Heart left ventricle (tissue), 16 donors: ENCODE measurements at regions of chr12 and their contacts with region 1.

Region 1: GRCh38 chr12:114508529-114509129 is 102.7 kb upstream of the TBX5 start:
- DNase-seq: peak; percentile 50 to 73 (median 59)
- ATAC-seq: peak in 3 of 4 donors; percentile 53 to 73 (median 68)
- H3K4me3 ChIP-seq: no peak overlapping the region
- H3K27ac ChIP-seq: no peak overlapping the region
- H3K4me1 ChIP-seq: no peaks in the 10 kb centered on the region
- H3K27me3 ChIP-seq: peaks cover 0 to 45% (median 3%) of the 10 kb centered on the region in 9 donors
- CTCF ChIP-seq: peak; percentile 58 to 84 (median 70)
- POLR2A ChIP-seq: no peak

Region 2: DNA sequence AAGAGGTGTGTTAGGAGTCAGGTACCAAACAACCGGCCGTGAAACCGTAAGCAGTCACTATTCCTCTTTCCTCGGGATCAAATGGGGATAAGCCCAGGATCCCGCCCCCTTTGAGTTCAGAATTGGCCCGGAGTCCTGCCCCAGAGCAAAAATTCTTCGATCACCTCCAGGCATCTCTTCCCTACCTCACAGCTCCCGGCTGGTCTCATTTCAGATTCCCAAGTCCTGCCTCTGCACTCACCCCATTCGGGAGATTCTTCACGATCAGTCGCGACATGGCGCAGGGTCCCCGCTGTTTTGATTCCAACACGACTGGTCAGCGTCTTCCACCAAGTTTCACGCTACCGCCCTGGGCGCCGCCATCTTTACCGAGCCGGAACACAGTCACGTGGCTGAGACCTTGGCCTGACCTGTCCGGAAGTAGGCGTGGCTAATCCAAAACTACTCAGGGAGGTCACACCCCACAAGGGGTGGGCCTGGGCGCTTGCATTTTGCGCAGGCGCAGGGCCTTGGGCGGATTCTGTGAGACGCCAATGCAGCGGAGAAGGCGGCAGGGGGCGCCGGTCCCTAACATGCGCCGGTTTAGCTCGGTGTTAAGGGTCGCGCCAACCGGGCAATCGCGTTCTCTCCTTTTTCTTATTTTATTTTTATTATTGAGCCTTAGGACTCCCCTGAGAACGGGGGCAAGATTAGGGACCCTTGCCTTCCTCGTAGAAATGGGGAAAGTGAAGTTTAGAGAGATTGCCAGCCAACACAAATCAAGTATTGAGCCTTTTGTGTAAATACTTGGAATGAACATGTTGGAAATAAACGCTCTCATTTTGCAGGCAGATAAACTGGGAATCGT is 542.5 kb before region 1 on chr12 and contains the start of gene RBM19:
- intact Hi-C with region 1: loop called in 3 of 10 experiments (anchors 1 to 5 kb)
- DNase-seq: peak; percentile 97 to 98 (median 98)
- ATAC-seq: peak; percentile 99 to 100 (median 100)
- H3K4me3 ChIP-seq: peak within 1 kb of the TSS; percentile 60 to 84 (median 72)
- H3K27ac ChIP-seq: peak within 1 kb of the TSS in 10 of 12 donors; percentile 10 to 69 (median 58)
- H3K4me1 ChIP-seq: peaks cover 0 to 24% (median 12%) of the 10 kb centered on the region in 12 donors
- H3K27me3 ChIP-seq: no peaks in the 10 kb centered on the region
- CTCF ChIP-seq: peak; percentile 81 to 99 (median 94)
- POLR2A ChIP-seq: peak in 1 of 2 donors; percentile 47
- total RNA-seq, gene RBM19: 12.7 to 23.8 (median 17.4) TPM

Region 3: DNA sequence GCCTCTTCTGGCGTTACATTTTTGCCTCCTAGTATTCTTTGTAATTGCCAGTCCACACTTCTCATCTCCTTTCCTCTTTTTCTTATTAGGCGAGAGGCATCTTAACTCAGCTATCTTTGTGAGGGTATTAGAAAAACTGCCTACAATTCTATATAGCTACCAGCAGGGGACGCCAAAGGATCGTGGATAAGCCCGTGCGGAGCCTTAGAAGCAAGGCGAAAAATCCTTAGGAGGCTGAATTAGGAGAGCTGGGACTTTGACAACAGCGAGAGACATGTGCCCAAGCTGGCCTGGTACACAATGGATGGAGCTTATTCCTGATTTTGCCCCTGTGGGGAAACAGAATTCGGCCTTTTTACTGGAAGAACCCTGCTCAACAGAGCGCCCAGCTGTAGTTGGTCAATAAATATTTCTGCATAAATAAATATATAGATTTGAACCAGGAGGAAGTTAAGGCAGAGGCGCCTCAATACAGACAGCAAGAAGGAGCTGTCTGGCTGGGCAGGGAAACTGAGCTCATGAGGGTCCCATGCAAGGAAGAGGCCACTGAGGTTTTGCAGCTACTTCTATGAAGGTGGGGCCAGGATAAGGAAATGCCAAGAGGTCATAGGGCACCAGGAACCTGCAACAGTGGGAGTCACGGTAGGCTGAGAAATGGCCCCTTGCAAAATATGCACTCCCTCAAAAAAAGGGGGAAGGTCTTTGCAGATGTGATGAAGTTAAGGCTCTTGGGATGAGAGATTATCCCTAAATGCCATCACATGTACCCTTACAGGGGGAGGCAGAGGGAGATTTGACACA is 527.9 kb before region 1 on chr12:
- intact Hi-C with region 1: loop called (anchors 1 to 5 kb)
- DNase-seq: peak in 1 of 5 donors; percentile 34
- ATAC-seq: peak in 3 of 4 donors; percentile 57 to 73 (median 67)
- H3K4me3 ChIP-seq: no peak overlapping the region
- H3K27ac ChIP-seq: no peak overlapping the region
- H3K4me1 ChIP-seq: no peaks in the 10 kb centered on the region
- H3K27me3 ChIP-seq: peaks cover 0 to 36% (median 10%) of the 10 kb centered on the region in 9 donors
- CTCF ChIP-seq: peak; percentile 77 to 96 (median 88)
- POLR2A ChIP-seq: no peak

Region 4: DNA sequence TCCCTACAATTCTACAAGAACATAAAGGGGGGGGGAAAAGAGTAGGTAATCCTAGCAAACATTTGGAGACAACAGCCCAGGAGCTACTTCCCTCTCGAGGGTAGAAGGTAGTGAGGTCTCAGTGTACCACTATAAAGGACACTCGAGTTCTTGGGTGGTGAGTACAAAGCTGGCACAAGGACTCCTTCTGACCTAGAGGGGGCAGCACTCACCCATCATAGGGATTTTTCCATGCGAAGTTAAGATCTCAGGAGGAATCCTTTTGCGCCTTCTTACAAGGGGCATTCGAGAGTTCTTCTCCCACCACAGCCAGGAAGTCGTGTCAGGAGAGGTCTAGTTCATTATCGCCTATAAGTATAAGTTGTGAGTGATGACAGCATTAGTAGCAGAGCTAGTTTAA is 342.3 kb before region 1 on chr12:
- intact Hi-C with region 1: loop called in 7 of 10 experiments (anchors 2 to 10 kb)
- DNase-seq: peak in 4 of 5 donors; percentile 29 to 38 (median 30)
- ATAC-seq: peak; percentile 48 to 82 (median 74)
- H3K4me3 ChIP-seq: no peak overlapping the region
- H3K27ac ChIP-seq: no peak overlapping the region
- H3K4me1 ChIP-seq: peaks cover 0 to 3% (median 0%) of the 10 kb centered on the region in 12 donors
- H3K27me3 ChIP-seq: peaks cover 0 to 8% (median 0%) of the 10 kb centered on the region in 9 donors
- CTCF ChIP-seq: peak; percentile 42 to 77 (median 66)
- POLR2A ChIP-seq: no peak

Region 5: DNA sequence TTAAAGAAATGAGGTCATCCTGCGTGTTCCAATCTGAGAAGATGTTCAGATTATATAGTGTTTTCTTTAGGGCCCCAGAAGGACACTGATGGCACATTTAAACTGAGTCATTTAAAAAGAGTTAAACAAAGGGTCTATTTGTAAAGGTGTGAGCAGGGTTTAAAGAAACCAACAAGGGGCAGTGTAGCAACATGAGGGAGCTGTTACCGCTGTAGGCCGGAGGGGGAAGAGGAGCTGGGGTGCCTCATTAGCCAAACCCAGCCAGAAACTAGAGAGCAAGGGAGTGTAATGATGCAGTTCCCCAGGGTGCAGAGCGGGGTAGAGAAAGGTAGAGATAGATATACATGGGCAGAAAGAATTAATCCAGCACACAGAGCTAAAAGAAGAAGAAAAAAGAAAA is 263.1 kb before region 1 on chr12:
- intact Hi-C with region 1: loop called in 1 of 10 experiments (anchors 10 kb)
- DNase-seq: no peak
- ATAC-seq: peak in 3 of 4 donors; percentile 41 to 59 (median 48)
- H3K4me3 ChIP-seq: no peak overlapping the region
- H3K27ac ChIP-seq: no peak overlapping the region
- H3K4me1 ChIP-seq: peaks cover 0 to 2% (median 0%) of the 10 kb centered on the region in 12 donors
- H3K27me3 ChIP-seq: peaks cover 0 to 15% (median 3%) of the 10 kb centered on the region in 9 donors
- CTCF ChIP-seq: peak in 8 of 12 donors; percentile 8 to 39 (median 26)
- POLR2A ChIP-seq: no peak